Activated B cell treated with CpG ODN at 0.5 μM for 24 hours (primary cell): ENCODE measurements at regions of chr5 and their contacts with region 1.

Region 1: DNA sequence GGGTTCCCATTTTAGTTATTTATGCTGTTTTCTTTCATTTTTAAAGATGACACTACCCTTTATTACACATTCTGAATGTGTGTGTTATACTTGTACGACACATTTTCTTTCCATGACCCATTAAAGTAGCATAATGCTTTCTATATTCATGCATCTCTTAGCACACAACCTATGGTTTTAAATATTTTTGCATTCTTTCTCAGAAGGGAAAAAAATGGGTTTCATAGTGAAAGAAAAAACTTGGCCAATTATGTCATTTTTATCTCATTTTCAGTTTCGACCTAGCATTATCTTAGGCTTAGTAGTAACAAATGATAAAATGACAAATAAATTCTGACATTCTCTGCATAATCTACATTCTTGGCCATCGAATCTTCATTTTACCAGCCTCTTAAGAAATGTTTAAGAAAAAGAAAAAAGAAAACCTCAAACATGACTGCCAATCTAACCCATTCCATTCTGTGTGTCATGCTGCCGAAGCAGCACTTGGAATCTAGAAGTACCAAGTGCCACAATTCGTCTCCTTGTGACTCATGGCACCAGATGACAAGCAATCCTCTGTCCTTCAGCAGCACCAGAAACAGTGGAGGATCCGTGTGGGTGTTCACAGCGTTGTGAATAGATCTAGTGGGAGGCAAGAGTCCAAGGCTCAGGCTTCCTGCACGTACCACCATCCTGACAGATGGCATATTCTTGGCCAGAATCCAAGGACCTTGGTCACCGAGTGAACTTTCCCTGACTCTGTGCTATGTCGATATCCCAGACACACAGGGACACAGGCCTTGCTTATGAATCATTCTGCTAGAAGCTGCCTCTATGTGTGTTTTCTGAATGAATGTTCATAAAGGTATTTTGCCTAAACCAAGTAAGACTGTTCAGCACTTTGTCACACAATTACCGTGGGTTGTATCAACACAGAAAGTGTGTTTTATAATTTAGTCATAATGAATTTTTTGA is 502.7 kb downstream of the NR2F1-AS1 start:
- DNase-seq: no peak
- ATAC-seq: no peak
- H3K4me3 Mint-ChIP-seq: no peak overlapping the region
- H3K27ac Mint-ChIP-seq: no peak overlapping the region
- H3K4me1 Mint-ChIP-seq: no peaks in the 10 kb centered on the region
- H3K27me3 Mint-ChIP-seq: no peaks in the 10 kb centered on the region
- CTCF ChIP-seq: no peak

Region 2: GRCh38 chr5:92484484-92484883 is 593.9 kb before region 1 on chr5:
- CTCF ChIA-PET with region 1: no interaction called
- POLR2A ChIA-PET with region 1: no interaction called
- intact Hi-C with region 1: no loop called
- DNase-seq: no peak
- ATAC-seq: no peak
- H3K4me3 Mint-ChIP-seq: no peak overlapping the region
- H3K27ac Mint-ChIP-seq: no peak overlapping the region
- H3K4me1 Mint-ChIP-seq: no peaks in the 10 kb centered on the region
- H3K27me3 Mint-ChIP-seq: no peaks in the 10 kb centered on the region
- CTCF ChIP-seq: no peak

Region 3: GRCh38 chr5:93090698-93091097 is 12.3 kb after region 1 on chr5:
- CTCF ChIA-PET with region 1: no interaction called
- POLR2A ChIA-PET with region 1: no interaction called
- intact Hi-C with region 1: loop called (anchors 1 kb)
- DNase-seq: no peak
- ATAC-seq: no peak
- H3K4me3 Mint-ChIP-seq: no peak overlapping the region
- H3K27ac Mint-ChIP-seq: no peak overlapping the region
- H3K4me1 Mint-ChIP-seq: no peaks in the 10 kb centered on the region
- H3K27me3 Mint-ChIP-seq: no peaks in the 10 kb centered on the region
- CTCF ChIP-seq: no peak